PC-3 (cell line): ENCODE measurements at regions of chr17 and their contacts with region 1.

Region 1: GRCh38 chr17:55540414-55541091 is 29.3 kb upstream of the SMIM36 start:
- DNase-seq: peak; percentile 89
- ATAC-seq: peak; percentile 94
- H3K4me3 ChIP-seq: no peak overlapping the region
- H3K27ac ChIP-seq: no peak overlapping the region
- H3K4me1 ChIP-seq: peaks cover 9% of the 10 kb centered on the region
- H3K27me3 ChIP-seq: peaks cover 8% of the 10 kb centered on the region; the same call in 1 of the 2 replicates
- CTCF ChIP-seq: no peak

Region 2: DNA sequence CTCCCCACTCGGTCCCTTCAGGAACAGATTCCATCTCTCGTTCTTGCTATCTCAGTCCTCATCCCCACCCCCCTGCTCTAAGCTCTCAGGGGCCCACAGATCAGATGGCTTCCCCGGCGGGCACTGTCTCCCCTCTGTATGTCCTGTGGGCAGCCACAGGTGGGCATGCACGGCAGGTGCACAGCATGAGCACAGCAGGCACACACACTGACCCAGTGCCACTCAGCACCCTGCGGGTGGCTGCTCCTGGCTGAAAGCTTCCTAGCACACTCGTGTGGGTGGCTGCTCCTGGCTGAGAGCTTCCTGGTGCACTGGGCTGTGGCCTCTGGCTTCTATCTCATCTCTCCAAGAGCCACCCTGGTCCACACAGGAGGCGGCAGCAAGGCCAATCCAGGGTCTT is 15.2 kb after region 1 on chr17:
- CTCF ChIA-PET with region 1: no interaction called
- POLR2A ChIA-PET with region 1: no interaction called
- intact Hi-C with region 1: no loop called
- DNase-seq: no peak
- ATAC-seq: no peak
- H3K4me3 ChIP-seq: no peak overlapping the region
- H3K27ac ChIP-seq: no peak overlapping the region
- H3K4me1 ChIP-seq: no peaks in the 10 kb centered on the region
- H3K27me3 ChIP-seq: peaks cover 52% of the 10 kb centered on the region
- CTCF ChIP-seq: no peak

Region 3: DNA sequence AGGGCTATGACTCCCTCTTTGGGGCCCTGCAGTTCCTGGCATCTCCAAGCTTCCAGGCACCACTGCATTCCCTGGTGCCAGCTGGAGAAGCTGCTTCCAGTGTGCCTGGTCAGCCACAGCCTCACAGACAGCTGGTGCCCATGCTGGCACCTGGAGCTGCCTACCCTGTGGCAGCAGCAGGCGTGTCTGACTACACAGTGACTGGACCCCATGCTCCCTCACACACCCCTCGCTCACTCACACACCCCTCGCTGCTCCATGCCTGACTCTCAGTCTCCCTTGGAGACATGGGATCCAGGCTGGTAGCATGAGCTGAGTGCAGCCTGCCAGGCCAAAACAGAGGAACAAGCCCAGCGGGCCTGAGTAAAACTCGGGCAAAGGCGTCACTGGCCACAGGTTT is 29.8 kb after region 1 on chr17:
- CTCF ChIA-PET with region 1: interaction called, 5 read pairs
- POLR2A ChIA-PET with region 1: interaction called, 3 read pairs
- intact Hi-C with region 1: loop called (anchors 2 kb)
- DNase-seq: peak; percentile 29
- ATAC-seq: peak; percentile 66
- H3K4me3 ChIP-seq: no peak overlapping the region
- H3K27ac ChIP-seq: peak overlapping the region; percentile 61
- H3K4me1 ChIP-seq: peaks cover 19% of the 10 kb centered on the region
- H3K27me3 ChIP-seq: no peaks in the 10 kb centered on the region
- CTCF ChIP-seq: no peak

Region 4: GRCh38 chr17:55607731-55608341 is 67.3 kb after region 1 on chr17:
- CTCF ChIA-PET with region 1: no interaction called
- POLR2A ChIA-PET with region 1: no interaction called
- intact Hi-C with region 1: no loop called
- DNase-seq: peak; percentile 97
- ATAC-seq: peak; percentile 96
- H3K4me3 ChIP-seq: no peak overlapping the region
- H3K27ac ChIP-seq: no peak overlapping the region
- H3K4me1 ChIP-seq: peaks cover 22% of the 10 kb centered on the region
- H3K27me3 ChIP-seq: peaks cover 17% of the 10 kb centered on the region
- CTCF ChIP-seq: no peak

Region 5: GRCh38 chr17:55872374-55872773 is 331.8 kb after region 1 on chr17:
- CTCF ChIA-PET with region 1: no interaction called
- POLR2A ChIA-PET with region 1: no interaction called
- intact Hi-C with region 1: no loop called
- DNase-seq: no peak
- ATAC-seq: no peak
- H3K4me3 ChIP-seq: no peak overlapping the region
- H3K27ac ChIP-seq: no peak overlapping the region
- H3K4me1 ChIP-seq: no peaks in the 10 kb centered on the region
- H3K27me3 ChIP-seq: no peaks in the 10 kb centered on the region
- CTCF ChIP-seq: no peak

Region 6: DNA sequence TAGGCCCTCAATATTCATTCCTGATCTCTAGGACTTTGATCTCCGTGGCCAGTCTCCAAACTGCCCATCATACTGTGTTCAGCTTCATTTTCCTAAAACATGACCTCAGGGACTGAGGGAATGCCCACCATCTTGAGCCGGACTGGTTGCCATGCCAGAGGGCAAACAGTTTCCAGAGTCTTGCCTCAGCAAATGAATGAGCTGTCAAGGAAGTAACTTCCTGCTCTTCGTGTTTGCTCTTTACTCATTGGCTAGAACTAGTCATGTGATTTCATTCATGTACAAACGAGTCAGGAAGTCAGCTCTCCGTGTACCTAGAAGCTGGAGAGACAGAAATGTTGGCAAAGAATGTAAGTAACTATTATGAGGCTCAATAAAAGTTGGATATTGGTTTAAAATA is 662.9 kb after region 1 on chr17:
- CTCF ChIA-PET with region 1: no interaction called
- POLR2A ChIA-PET with region 1: interaction called, 14 read pairs
- intact Hi-C with region 1: no loop called
- DNase-seq: peak; percentile 28
- ATAC-seq: no peak
- H3K4me3 ChIP-seq: no peak overlapping the region
- H3K27ac ChIP-seq: no peak overlapping the region
- H3K4me1 ChIP-seq: no peaks in the 10 kb centered on the region
- H3K27me3 ChIP-seq: peaks cover 5% of the 10 kb centered on the region; the same call in 1 of the 2 replicates
- CTCF ChIP-seq: no peak